ENCODE measurements at regions of chr2 and their contacts with region 1.

Region 1: DNA sequence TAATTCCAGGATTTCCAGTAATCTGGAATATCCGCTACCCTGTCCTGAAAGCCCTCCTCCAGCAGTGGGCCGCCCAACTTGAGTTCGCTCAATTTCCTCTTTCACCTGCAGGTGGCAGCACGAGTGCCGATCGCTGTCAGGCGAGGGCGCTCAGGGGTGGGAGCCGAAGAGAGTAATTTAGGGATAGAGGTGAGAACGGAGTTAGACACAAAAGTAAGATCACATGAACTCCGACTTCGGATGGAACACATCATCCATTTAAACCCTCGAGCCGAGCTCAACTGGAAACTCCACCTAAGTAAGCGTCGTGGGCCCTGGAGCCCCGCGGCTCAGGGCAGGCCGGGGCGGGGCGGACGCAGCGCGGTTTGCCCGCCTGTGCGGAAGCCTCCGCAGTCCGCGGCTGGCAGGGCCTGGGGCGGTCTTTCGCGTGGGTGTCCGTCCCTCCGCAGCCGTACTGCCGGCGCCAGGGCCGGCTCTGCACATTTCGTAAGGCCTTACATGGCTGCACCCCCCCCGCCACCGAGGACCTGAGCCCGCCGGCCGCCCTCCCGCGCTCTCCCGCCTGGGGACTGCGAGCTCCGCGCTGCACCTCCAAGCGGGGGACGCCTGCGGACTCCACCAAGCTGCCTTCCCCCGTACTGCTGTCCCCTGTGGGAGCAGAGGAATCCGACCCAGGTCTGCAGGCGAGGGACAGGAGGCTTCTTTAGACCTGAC is 61.2 kb downstream of the SEMA4F start:
- DNase-seq: peak; percentile 48 to 69
- ATAC-seq: peak; percentile 83 to 86
- H3K4me3 ChIP-seq: peak overlapping the region; percentile 56 to 63 (median 58)
- H3K27ac ChIP-seq: peak overlapping the region; percentile 62 to 80 (median 70)
- H3K4me1 ChIP-seq: peaks cover 17 to 24% of the 10 kb centered on the region in 2 donors
- H3K27me3 ChIP-seq: no peaks in the 10 kb centered on the region
- CTCF ChIP-seq: peak; percentile 57 to 88 (median 85)
- POLR2A ChIP-seq: peak in 1 of 2 donors; percentile 25

Region 2: GRCh38 chr2:74597410-74597809 is 117.8 kb before region 1 on chr2:
- in situ Hi-C with region 1: no loop called
- intact Hi-C with region 1: no loop called
- DNase-seq: no peak
- ATAC-seq: no peak
- H3K4me3 ChIP-seq: no peak overlapping the region
- H3K27ac ChIP-seq: no peak overlapping the region
- H3K4me1 ChIP-seq: no peaks in the 10 kb centered on the region
- H3K27me3 ChIP-seq: peaks cover 7 to 12% (median 10%) of the 10 kb centered on the region in 3 donors
- CTCF ChIP-seq: no peak
- POLR2A ChIP-seq: no peak

Region 3: DNA sequence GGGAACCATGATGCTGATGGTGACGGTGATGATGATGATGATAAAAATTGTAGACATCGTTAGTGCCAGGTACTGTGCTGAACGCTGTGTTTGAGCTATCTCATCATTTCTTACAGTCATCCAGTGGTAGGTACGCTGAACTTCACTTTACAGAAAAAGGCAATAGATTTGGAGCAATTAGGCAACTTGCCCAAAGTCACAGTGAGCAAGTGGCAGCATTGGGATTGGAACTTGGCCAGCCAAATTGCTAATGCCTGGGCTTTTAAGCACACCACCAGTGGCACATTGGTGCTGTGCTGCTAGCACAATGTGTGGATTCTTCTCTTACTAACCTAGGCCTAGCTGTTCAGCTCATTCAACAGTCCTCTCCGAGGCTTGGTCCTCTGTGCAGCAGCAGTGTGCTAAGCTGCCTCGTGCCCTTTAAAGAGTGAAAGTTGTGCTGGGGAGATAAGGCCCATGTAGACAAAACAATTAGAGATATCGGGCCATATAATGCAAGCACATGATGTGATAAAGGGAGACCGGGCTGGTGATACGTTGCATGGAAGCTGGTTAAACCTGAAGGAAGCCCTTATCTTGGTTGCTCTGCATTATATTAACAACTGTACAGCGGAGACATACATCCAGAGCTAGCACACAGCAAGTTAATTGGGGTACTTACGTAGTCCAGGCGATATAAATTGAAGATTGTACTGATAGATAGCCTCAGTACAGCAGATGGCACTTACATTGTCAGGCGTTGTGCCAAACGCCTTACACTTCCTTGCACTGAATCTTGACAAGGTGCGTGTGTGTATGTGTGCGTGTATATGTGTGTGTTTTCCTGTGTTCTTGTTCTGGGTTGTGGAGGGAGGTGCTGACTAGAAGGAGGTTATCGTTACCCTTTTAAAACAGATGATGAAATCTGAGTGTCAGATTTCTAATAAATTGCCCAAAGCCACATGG is 147.1 kb after region 1 on chr2:
- in situ Hi-C with region 1: no loop called
- intact Hi-C with region 1: no loop called
- DNase-seq: no peak
- ATAC-seq: no peak
- H3K4me3 ChIP-seq: no peak overlapping the region
- H3K27ac ChIP-seq: peak overlapping the region; percentile 75 to 92 (median 88)
- H3K4me1 ChIP-seq: peaks cover 26 to 59% of the 10 kb centered on the region in 2 donors
- H3K27me3 ChIP-seq: no peaks in the 10 kb centered on the region
- CTCF ChIP-seq: no peak
- POLR2A ChIP-seq: no peak

Region 4: GRCh38 chr2:74876081-74876886 is 161.0 kb after region 1 on chr2:
- in situ Hi-C with region 1: loop called (anchors 5 to 10 kb)
- intact Hi-C with region 1: loop called (anchors 1 kb)
- DNase-seq: peak in 1 of 2 donors; percentile 29
- ATAC-seq: peak; percentile 65 to 74
- H3K4me3 ChIP-seq: no peak overlapping the region
- H3K27ac ChIP-seq: peak overlapping the region; percentile 41 to 73 (median 62)
- H3K4me1 ChIP-seq: peaks cover 0 to 28% of the 10 kb centered on the region in 2 donors
- H3K27me3 ChIP-seq: no peaks in the 10 kb centered on the region
- CTCF ChIP-seq: peak; percentile 49 to 78 (median 77)
- POLR2A ChIP-seq: no peak